ENCODE measurements at regions of chr1 and their contacts with region 1.

Region 1: DNA sequence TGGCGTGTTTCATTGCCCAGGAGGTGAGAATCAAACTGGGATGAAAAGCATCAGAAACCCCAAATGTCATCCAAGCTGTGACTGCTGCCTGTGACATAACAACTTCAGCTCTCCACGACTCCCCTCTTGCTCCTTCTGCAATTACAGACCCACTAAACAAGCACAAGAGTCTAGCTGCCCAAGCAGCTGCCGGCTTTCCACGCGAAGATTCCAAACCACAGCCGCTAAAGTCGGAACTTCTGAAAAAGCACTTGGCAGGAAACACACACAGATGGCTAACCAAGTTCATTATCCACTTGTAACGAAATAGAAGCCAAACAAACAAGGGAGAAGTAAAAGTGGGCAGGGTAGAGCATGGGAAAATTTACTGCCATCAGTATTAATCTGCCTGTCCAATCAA is 198.1 kb downstream of the SLC35F3 start:
- H3K4me3 ChIP-seq: no peak overlapping the region
- H3K27ac ChIP-seq: no peak overlapping the region
- H3K4me1 ChIP-seq: peaks cover 9% of the 10 kb centered on the region
- CTCF ChIP-seq: no peak

Region 2: GRCh38 chr1:233885196-233886028 is 217.2 kb before region 1 on chr1:
- CTCF ChIA-PET with region 1: no interaction called
- POLR2A ChIA-PET with region 1: no interaction called
- H3K4me3 ChIP-seq: no peak overlapping the region
- H3K27ac ChIP-seq: no peak overlapping the region
- H3K4me1 ChIP-seq: no peaks in the 10 kb centered on the region
- CTCF ChIP-seq: no peak

Region 3: GRCh38 chr1:234114648-234115307 is 12.2 kb after region 1 on chr1:
- CTCF ChIA-PET with region 1: interaction called, 22 read pairs
- POLR2A ChIA-PET with region 1: no interaction called
- H3K4me3 ChIP-seq: no peak overlapping the region
- H3K27ac ChIP-seq: no peak overlapping the region
- H3K4me1 ChIP-seq: no peaks in the 10 kb centered on the region
- CTCF ChIP-seq: peak; percentile 80